B cell (primary cell): ENCODE measurements at regions of chr3 and their contacts with region 1.

Region 1: DNA sequence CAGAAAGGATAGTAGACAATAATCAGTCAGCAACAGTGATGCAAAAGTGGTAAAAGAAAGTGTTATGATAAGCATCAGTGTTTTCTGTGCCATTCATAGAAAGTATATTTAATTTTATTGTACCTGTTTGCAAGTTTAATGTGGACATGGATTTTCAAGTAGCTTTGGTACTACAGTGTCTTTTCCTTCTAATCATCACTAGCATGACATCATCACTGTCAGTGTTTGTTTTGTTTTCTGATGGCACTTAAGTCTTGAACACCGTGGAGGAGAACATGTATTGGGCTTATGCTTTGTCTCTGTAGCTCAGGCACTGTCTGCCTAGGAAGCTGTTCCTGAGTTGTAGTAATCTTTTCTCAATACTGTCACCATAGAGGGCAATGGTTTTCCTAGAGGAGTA is 41.9 kb downstream of the SETD5 start:
- DNase-seq: no peak
- ATAC-seq: no peak
- H3K4me3 ChIP-seq: no peak overlapping the region
- H3K4me3 Mint-ChIP-seq: no peak overlapping the region
- H3K27ac ChIP-seq: no peak overlapping the region
- H3K27ac Mint-ChIP-seq: no peak overlapping the region
- H3K4me1 ChIP-seq: no peaks in the 10 kb centered on the region
- H3K4me1 Mint-ChIP-seq: no peaks in the 10 kb centered on the region
- H3K27me3 ChIP-seq: no peaks in the 10 kb centered on the region
- H3K27me3 Mint-ChIP-seq: no peaks in the 10 kb centered on the region
- CTCF ChIP-seq: no peak

Region 2: DNA sequence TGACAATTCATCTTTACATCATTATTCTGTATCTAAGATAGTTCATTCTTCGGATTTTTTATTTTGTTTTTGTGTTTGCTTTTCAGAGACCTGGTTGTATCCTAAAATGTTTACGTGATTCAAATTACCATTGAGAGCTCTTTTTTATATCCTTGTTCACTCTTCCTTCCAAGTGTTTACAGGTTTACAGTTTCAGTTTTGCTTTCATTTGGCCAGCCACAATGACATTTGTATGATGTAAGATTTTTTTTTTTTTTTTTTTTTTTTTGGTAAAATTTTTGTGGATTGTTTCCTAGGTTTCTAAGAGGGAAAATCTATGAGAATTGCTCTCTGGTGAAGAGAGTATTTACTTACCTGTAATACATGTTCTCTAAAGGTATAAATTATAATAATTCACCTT is 13.1 kb after region 1 on chr3:
- CTCF ChIA-PET with region 1: interaction called, 3 read pairs
- POLR2A ChIA-PET with region 1: no interaction called
- intact Hi-C with region 1: loop called (anchors 2 kb)
- DNase-seq: no peak
- ATAC-seq: no peak
- H3K4me3 ChIP-seq: no peak overlapping the region
- H3K4me3 Mint-ChIP-seq: no peak overlapping the region
- H3K27ac ChIP-seq: peak overlapping the region in 1 of 2 donors; percentile 50
- H3K27ac Mint-ChIP-seq: peak overlapping the region; percentile 28
- H3K4me1 ChIP-seq: peaks cover 0 to 4% of the 10 kb centered on the region in 2 donors
- H3K4me1 Mint-ChIP-seq: peaks cover 6% of the 10 kb centered on the region
- H3K27me3 ChIP-seq: no peaks in the 10 kb centered on the region
- H3K27me3 Mint-ChIP-seq: no peaks in the 10 kb centered on the region
- CTCF ChIP-seq: no peak

Region 3: GRCh38 chr3:9473496-9474065 is 34.2 kb after region 1 on chr3:
- CTCF ChIA-PET with region 1: no interaction called
- POLR2A ChIA-PET with region 1: no interaction called
- intact Hi-C with region 1: no loop called
- DNase-seq: no peak
- ATAC-seq: no peak
- H3K4me3 ChIP-seq: no peak overlapping the region
- H3K4me3 Mint-ChIP-seq: no peak overlapping the region
- H3K27ac ChIP-seq: no peak overlapping the region
- H3K27ac Mint-ChIP-seq: no peak overlapping the region
- H3K4me1 ChIP-seq: no peaks in the 10 kb centered on the region
- H3K4me1 Mint-ChIP-seq: no peaks in the 10 kb centered on the region
- H3K27me3 ChIP-seq: no peaks in the 10 kb centered on the region
- H3K27me3 Mint-ChIP-seq: no peaks in the 10 kb centered on the region
- CTCF ChIP-seq: no peak